Mammary epithelial cell (primary cell): ENCODE measurements at regions of chr11 and their contacts with region 1.

Region 1: DNA sequence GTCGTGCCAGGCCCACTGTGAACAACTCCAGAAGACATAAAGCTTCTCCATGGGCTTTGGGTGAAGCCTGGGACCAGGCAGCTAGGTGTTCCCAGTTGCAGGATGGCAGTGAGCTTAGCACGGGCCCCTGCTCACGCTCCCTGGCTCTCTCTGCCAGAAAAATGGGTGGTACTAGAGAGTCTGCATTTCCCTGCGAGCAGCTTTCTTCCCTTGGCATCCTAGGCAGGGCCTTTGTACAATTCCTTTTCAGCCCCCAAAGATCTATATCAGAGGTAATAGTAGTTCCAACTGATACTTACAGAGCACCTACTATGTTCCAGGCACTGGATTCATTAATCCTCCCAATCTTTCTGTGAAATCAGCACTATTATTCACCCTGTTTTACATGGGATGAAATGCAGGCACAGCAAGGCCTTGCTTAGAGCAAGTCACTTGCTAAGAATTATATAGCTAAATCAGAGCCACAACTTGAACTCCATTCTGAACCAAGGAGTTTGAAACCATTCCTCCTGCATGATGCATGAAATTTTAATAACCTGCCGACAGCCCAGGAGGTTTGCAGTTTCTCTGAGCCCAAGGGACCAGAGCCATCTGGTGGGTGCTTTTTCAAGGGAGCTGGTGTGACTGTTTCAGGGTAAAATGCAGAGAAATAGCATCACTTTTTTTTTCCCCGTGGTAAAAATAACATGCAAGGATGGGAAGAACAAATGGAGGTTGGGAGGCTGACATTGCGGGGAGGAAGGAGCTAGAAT is 22.7 kb downstream of the NAV2 start:
- DNase-seq: no peak
- H3K4me3 ChIP-seq: no peak overlapping the region
- H3K27ac ChIP-seq: no peak overlapping the region
- H3K4me1 ChIP-seq: peaks cover 4% of the 10 kb centered on the region
- H3K27me3 ChIP-seq: no peaks in the 10 kb centered on the region
- CTCF ChIP-seq: peak in 1 of 2 donors; percentile 35

Region 2: GRCh38 chr11:19561011-19561410 is 174.3 kb before region 1 on chr11:
- CTCF ChIA-PET with region 1: interaction called, 4 read pairs
- dilution Hi-C with region 1: loop called (anchors 25 kb)
- in situ Hi-C with region 1: loop called (anchors 5 kb)
- intact Hi-C with region 1: loop called (anchors 1 kb)
- DNase-seq: no peak
- H3K4me3 ChIP-seq: no peak overlapping the region
- H3K27ac ChIP-seq: no peak overlapping the region
- H3K4me1 ChIP-seq: peaks cover 5% of the 10 kb centered on the region
- H3K27me3 ChIP-seq: no peaks in the 10 kb centered on the region
- CTCF ChIP-seq: no peak

Region 3: GRCh38 chr11:19698493-19699292 is 36.6 kb before region 1 on chr11:
- CTCF ChIA-PET with region 1: no interaction called
- dilution Hi-C with region 1: no loop called
- in situ Hi-C with region 1: no loop called
- intact Hi-C with region 1: no loop called
- DNase-seq: peak; percentile 60
- H3K4me3 ChIP-seq: no peak overlapping the region
- H3K27ac ChIP-seq: no peak overlapping the region
- H3K4me1 ChIP-seq: peaks cover 23% of the 10 kb centered on the region
- H3K27me3 ChIP-seq: no peaks in the 10 kb centered on the region
- CTCF ChIP-seq: no peak

Region 4: GRCh38 chr11:19779740-19780139 is 44.4 kb after region 1 on chr11:
- CTCF ChIA-PET with region 1: no interaction called
- dilution Hi-C with region 1: loop called (anchors 5 kb)
- in situ Hi-C with region 1: no loop called
- intact Hi-C with region 1: no loop called
- DNase-seq: no peak
- H3K4me3 ChIP-seq: no peak overlapping the region
- H3K27ac ChIP-seq: no peak overlapping the region
- H3K4me1 ChIP-seq: peaks cover 7% of the 10 kb centered on the region
- H3K27me3 ChIP-seq: no peaks in the 10 kb centered on the region
- CTCF ChIP-seq: no peak